Right lobe of liver (tissue), 6 donors: ENCODE measurements at regions of chr7 and their contacts with region 1.

Region 1: GRCh38 chr7:73606801-73607691 is 17.3 kb downstream of the MLXIPL start:
- DNase-seq: peak in 1 of 3 donors; percentile 57
- ATAC-seq: peak; percentile 23 to 46 (median 30)
- H3K4me3 ChIP-seq: no peak overlapping the region
- H3K27ac ChIP-seq: no peak overlapping the region
- H3K4me1 ChIP-seq: peaks cover 0 to 29% (median 12%) of the 10 kb centered on the region in 4 donors
- H3K27me3 ChIP-seq: no peaks in the 10 kb centered on the region
- CTCF ChIP-seq: peak; percentile 75 to 86 (median 83)
- POLR2A ChIP-seq: no peak

Region 2: GRCh38 chr7:73397521-73398281 is 209.3 kb before region 1 on chr7:
- intact Hi-C with region 1: no loop called
- DNase-seq: no peak
- ATAC-seq: no peak
- H3K4me3 ChIP-seq: no peak overlapping the region
- H3K27ac ChIP-seq: no peak overlapping the region
- H3K4me1 ChIP-seq: no peaks in the 10 kb centered on the region
- H3K27me3 ChIP-seq: no peaks in the 10 kb centered on the region
- CTCF ChIP-seq: no peak
- POLR2A ChIP-seq: no peak

Region 3: GRCh38 chr7:73678862-73679261 is 71.8 kb after region 1 on chr7:
- intact Hi-C with region 1: loop called in 1 of 2 experiments (anchors 10 kb)
- DNase-seq: no peak
- ATAC-seq: no peak
- H3K4me3 ChIP-seq: no peak overlapping the region
- H3K27ac ChIP-seq: no peak overlapping the region
- H3K4me1 ChIP-seq: peaks cover 0 to 26% (median 12%) of the 10 kb centered on the region in 4 donors
- H3K27me3 ChIP-seq: no peaks in the 10 kb centered on the region
- CTCF ChIP-seq: no peak
- POLR2A ChIP-seq: no peak

Region 4: DNA sequence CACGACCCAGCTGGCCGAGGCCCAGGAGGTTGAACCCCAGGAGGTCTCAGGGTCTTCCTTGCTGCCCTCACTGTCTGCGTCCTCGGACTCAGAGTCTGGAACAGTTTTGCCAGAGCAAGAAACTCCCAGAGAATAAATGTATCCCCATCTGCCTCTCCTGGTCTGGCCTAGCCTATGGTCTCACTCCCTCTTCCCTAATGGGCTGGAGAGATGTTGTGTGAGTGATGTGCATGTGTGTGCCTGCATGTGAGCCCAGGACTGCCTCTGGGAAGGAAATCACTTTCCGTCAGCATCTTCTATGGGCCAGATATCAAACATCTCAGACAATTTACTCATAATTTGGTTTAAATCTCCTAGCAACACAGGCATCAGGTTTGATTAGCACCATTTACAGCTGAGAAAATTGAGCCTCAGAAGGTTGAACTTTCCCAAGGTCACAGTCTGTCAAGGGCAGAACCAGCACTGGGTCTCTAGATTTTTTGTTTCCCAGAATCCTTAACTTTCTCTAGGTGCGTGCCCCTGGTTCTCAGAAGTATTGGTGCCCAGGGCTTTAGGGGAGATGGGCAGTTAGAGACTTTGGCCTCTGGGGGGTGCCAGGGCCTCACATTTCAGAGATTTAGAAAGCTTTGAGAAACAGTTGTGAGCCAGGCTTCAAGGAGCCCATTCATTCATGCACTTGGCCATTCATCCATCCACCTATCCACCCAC is 258.8 kb after region 1 on chr7:
- intact Hi-C with region 1: no loop called
- DNase-seq: no peak
- ATAC-seq: peak; percentile 53 to 70 (median 62)
- H3K4me3 ChIP-seq: no peak overlapping the region
- H3K27ac ChIP-seq: no peak overlapping the region
- H3K4me1 ChIP-seq: peaks cover 0 to 14% (median 5%) of the 10 kb centered on the region in 4 donors
- H3K27me3 ChIP-seq: no peaks in the 10 kb centered on the region
- CTCF ChIP-seq: peak; percentile 70 to 74 (median 71)
- POLR2A ChIP-seq: no peak